AG04450 (cell line): ENCODE measurements at regions of chr14 and their contacts with region 1.

Region 1: DNA sequence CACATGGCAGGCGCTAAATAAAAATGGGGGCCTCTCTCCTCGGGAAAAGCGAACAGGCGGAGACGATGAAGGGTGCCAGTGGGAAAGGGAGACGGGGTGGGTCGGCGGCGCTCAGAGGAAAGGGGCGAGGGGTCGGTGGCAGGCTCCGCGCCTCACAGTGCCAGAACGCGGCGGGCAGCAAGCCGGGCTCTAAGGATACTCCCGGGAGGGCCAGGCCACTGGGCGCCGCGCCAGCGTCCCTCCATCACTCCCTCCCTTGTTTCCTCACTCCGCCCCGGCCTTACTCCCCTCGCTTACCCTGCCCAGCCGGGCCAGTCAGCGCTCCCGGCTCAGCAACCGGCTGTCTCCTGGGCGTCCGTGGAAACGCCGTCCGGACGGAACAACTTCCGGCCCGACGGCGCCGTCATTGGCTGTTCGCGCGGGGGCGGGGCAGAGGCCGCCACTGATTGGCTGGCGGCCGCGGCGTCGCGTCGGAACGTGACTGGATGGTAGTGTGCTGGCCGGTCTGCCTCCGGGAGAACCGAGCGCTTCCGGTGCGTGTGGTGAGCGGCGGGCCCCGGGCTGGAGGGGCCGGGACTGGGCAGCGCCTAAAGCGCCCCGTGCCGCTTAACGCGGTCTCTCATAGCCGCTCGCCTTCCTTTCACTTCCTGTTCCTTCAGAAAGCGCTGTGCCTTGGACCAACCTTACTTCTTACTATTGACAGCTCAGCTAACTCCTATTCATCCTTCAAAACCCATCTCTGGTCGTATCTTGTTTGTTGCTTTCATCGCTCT is 53.0 kb downstream of the SLC25A47 start:
- DNase-seq: peak; percentile 93
- H3K4me3 ChIP-seq: peak within 1 kb of the TSS; percentile 90
- H3K27ac ChIP-seq: peak within 1 kb of the TSS; percentile 100
- H3K27me3 ChIP-seq: no peaks in the 10 kb centered on the region
- CTCF ChIP-seq: no peak

Region 2: DNA sequence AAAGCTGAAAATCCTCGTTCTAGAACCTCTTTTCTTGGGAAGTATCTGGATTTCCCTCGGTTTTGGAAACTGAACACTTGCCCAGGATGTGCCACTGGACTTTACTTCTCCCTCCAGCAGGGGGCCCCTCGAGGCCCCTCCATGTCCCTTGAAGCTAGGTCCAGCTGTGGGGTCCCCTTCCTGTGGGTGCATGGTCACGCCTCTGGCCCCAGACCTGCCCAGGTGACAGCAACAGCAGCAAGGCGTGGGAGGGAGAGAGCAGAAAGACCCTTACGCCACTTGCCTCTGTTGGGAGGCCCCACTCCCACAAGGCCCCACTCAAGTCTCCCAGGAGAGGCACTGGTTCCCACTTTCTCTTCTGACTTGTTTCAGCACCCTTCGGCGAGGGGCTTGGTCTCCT is 73.0 kb before region 1 on chr14:
- CTCF ChIA-PET with region 1: interaction called, 11 read pairs
- POLR2A ChIA-PET with region 1: interaction called, 5 read pairs
- DNase-seq: no peak
- H3K4me3 ChIP-seq: no peak overlapping the region
- H3K27ac ChIP-seq: no peak overlapping the region
- H3K27me3 ChIP-seq: no peaks in the 10 kb centered on the region
- CTCF ChIP-seq: peak; percentile 78

Region 3: DNA sequence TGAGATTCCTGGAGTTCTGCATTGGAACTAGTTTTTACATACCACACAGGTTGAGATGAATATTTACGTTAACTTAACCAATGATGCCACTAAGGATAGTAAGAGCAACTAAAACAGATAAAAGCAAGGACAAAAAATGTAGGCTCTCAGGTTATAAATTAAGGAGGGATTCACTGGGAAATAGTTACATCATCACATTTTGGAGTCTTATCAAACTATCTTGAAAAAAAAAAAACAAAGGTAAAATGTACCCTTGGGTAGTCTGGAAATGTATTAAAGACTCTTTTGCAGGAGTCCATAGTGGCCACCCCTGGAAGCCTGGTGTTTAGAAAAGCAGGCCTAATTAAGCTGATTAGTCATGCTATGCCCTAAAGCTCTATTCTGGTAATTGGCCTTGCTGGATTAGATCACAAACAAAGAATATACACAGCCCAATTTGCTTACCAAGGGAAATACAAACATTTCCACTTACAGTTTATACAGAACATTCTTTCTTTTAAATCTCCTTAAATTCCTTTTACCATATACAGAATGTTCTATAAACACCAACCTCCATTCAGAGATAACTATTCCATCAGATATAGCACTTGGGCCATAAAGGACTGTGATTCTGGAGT is 13.7 kb before region 1 on chr14:
- CTCF ChIA-PET with region 1: interaction called, 4 read pairs
- POLR2A ChIA-PET with region 1: interaction called, 21 read pairs
- DNase-seq: peak; percentile 46
- H3K4me3 ChIP-seq: no peak overlapping the region
- H3K27ac ChIP-seq: no peak overlapping the region
- H3K27me3 ChIP-seq: no peaks in the 10 kb centered on the region
- CTCF ChIP-seq: no peak